Common myeloid progenitor, CD34-positive (primary cell): ENCODE measurements at regions of chr3 and their contacts with region 1.

Region 1: GRCh38 chr3:169966428-169966950 is at the start of gene SEC62:
- DNase-seq: peak; percentile 95 to 98 (median 97)
- H3K4me3 ChIP-seq: peak within 1 kb of the TSS; percentile 57 to 98 (median 90)
- H3K27ac ChIP-seq: peak within 1 kb of the TSS; percentile 87 to 92
- H3K4me1 ChIP-seq: peaks cover 11 to 23% (median 14%) of the 10 kb centered on the region in 4 experiments
- H3K27me3 ChIP-seq: no peaks in the 10 kb centered on the region

Region 2: GRCh38 chr3:169863458-169863899 is 103.0 kb before region 1 on chr3:
- CTCF ChIA-PET with region 1: interaction called, 26 read pairs
- POLR2A ChIA-PET with region 1: no interaction called
- DNase-seq: peak; percentile 83 to 88 (median 85)
- H3K4me3 ChIP-seq: no peak overlapping the region
- H3K27ac ChIP-seq: no peak overlapping the region
- H3K4me1 ChIP-seq: peaks cover 2 to 13% (median 11%) of the 10 kb centered on the region in 4 experiments
- H3K27me3 ChIP-seq: peaks cover 0 to 9% (median 0%) of the 10 kb centered on the region in 5 experiments

Region 3: GRCh38 chr3:169931747-169932520 is 34.6 kb before region 1 on chr3:
- CTCF ChIA-PET with region 1: interaction called, 21 read pairs
- POLR2A ChIA-PET with region 1: no interaction called
- DNase-seq: peak in 1 of 3 donors; percentile 32
- H3K4me3 ChIP-seq: no peak overlapping the region
- H3K27ac ChIP-seq: no peak overlapping the region
- H3K4me1 ChIP-seq: peaks cover 0 to 7% (median 5%) of the 10 kb centered on the region in 4 experiments
- H3K27me3 ChIP-seq: no peaks in the 10 kb centered on the region

Region 4: DNA sequence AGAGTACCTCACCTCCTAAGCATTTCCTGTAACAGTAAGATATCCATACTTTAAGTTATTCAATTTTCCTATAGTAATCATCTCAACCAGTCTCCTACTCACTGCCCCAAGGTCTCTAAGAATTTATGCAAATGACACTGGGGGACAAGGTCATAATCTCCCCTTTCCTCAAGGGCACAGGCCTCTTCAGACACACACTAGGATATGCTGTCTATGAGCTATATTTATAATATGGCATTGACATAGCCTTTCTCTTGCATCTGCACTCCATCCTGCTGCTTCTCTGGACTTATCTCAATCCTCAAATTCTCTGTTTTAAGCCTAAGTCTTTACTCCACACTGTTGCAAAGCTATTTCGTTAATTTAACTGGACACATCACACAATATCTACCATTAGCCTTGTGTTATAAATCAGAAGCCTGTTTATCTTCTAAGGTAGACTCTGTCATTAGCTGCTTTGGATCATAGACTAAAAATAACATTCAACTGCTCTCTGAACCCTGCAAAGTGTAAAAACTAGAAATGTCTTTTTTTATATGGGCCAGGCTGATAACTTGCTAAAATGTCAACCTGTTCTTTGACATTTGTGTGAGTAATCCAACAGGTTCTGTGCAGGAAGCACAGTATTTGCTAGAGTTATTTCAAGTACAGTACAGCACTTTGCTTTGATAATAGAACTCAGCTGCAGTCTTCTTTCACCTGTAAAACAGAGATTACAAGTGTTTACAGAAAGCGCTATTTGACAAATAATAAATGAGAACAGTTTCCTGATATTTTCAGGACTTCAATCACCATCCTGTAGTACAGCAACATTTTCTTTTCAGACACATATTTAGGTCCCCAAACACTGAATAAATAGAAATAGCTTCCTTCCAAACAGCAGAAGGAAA is 17.7 kb before region 1 on chr3:
- CTCF ChIA-PET with region 1: interaction called, 10 read pairs
- POLR2A ChIA-PET with region 1: no interaction called
- DNase-seq: no peak
- H3K4me3 ChIP-seq: no peak overlapping the region
- H3K27ac ChIP-seq: no peak overlapping the region
- H3K4me1 ChIP-seq: peaks cover 5 to 22% (median 8%) of the 10 kb centered on the region in 4 experiments
- H3K27me3 ChIP-seq: no peaks in the 10 kb centered on the region

Region 5: GRCh38 chr3:169954142-169954756 is 12.2 kb before region 1 on chr3:
- CTCF ChIA-PET with region 1: interaction called, 13 read pairs
- POLR2A ChIA-PET with region 1: no interaction called
- DNase-seq: peak in 2 of 3 donors; percentile 67 to 76
- H3K4me3 ChIP-seq: no peak overlapping the region
- H3K27ac ChIP-seq: no peak overlapping the region
- H3K4me1 ChIP-seq: peaks cover 0 to 17% (median 2%) of the 10 kb centered on the region in 4 experiments
- H3K27me3 ChIP-seq: no peaks in the 10 kb centered on the region

Region 6: GRCh38 chr3:169980055-169980454 is 13.6 kb after region 1 on chr3:
- CTCF ChIA-PET with region 1: interaction called, 11 read pairs
- POLR2A ChIA-PET with region 1: interaction called, 3 read pairs
- DNase-seq: no peak
- H3K4me3 ChIP-seq: no peak overlapping the region
- H3K27ac ChIP-seq: no peak overlapping the region
- H3K4me1 ChIP-seq: peaks cover 0 to 6% (median 4%) of the 10 kb centered on the region in 4 experiments
- H3K27me3 ChIP-seq: no peaks in the 10 kb centered on the region

Region 7: GRCh38 chr3:170259853-170260386 is 293.4 kb after region 1 on chr3:
- CTCF ChIA-PET with region 1: no interaction called
- POLR2A ChIA-PET with region 1: no interaction called
- DNase-seq: no peak
- H3K4me3 ChIP-seq: no peak overlapping the region
- H3K27ac ChIP-seq: no peak overlapping the region
- H3K4me1 ChIP-seq: no peaks in the 10 kb centered on the region
- H3K27me3 ChIP-seq: no peaks in the 10 kb centered on the region